Heart right ventricle (tissue), 16 donors: ENCODE measurements at regions of chr2 and their contacts with region 1.

Region 1: GRCh38 chr2:5391362-5391761 is 300.8 kb upstream of the SOX11 start:
- DNase-seq: peak; percentile 49 to 70
- ATAC-seq: peak in 7 of 8 donors; percentile 43 to 89 (median 77)
- H3K4me3 ChIP-seq: no peak overlapping the region
- H3K27ac ChIP-seq: no peak overlapping the region
- H3K4me1 ChIP-seq: no peaks in the 10 kb centered on the region
- H3K27me3 ChIP-seq: no peaks in the 10 kb centered on the region
- CTCF ChIP-seq: no peak

Region 2: DNA sequence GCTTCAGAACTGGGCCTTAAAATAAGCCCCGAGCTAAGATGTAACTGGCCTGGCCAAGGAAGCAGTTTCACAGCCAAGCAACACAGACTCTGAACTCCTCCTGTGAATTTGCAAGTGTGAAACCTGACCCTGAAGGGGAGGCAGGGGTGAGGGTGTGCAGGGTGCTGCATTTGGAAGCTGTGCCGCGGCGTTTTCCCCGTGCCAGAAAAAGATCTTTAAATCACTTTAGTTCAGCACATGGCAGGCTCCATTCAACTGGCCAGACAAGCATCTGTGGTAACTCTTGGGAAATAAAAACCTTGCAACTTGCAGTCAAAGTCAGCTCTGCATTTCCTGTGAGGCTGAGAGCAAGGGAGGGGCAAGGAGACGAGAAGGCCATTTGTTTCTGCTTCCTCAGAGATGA is 91.6 kb after region 1 on chr2:
- intact Hi-C with region 1: no loop called
- DNase-seq: peak in 1 of 2 donors; percentile 7
- ATAC-seq: peak in 2 of 8 donors; percentile 17 to 40
- H3K4me3 ChIP-seq: no peak overlapping the region
- H3K27ac ChIP-seq: peak overlapping the region in 3 of 10 donors; percentile 22 to 48 (median 42)
- H3K4me1 ChIP-seq: peaks cover 0 to 35% (median 7%) of the 10 kb centered on the region in 9 donors
- H3K27me3 ChIP-seq: no peaks in the 10 kb centered on the region
- CTCF ChIP-seq: no peak

Region 3: GRCh38 chr2:5519286-5519685 is 127.9 kb after region 1 on chr2:
- intact Hi-C with region 1: loop called in 1 of 10 experiments (anchors 5 kb)
- DNase-seq: no peak
- ATAC-seq: no peak
- H3K4me3 ChIP-seq: no peak overlapping the region
- H3K27ac ChIP-seq: no peak overlapping the region
- H3K4me1 ChIP-seq: peaks cover 0 to 23% (median 9%) of the 10 kb centered on the region in 9 donors
- H3K27me3 ChIP-seq: no peaks in the 10 kb centered on the region
- CTCF ChIP-seq: no peak

Region 4: DNA sequence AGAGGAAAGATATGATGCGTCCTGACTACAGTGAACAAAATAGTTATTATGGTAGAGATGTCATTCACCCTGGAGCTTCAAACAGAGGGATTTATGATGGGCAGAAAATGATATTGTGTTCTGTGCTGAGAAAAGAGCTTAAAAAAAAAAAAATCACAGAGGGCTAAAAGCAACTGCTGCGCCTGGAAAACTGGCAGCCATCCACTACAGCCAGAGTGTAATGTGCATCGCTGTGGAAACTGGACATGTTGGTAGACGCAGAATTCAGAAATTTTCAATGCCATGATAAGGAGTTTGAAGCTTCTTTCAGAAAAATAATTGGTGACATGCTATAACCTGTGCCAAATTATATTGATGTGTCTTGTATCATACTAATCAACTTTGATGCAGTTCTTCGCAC is 177.9 kb after region 1 on chr2:
- intact Hi-C with region 1: no loop called
- DNase-seq: no peak
- ATAC-seq: no peak
- H3K4me3 ChIP-seq: no peak overlapping the region
- H3K27ac ChIP-seq: no peak overlapping the region
- H3K4me1 ChIP-seq: no peaks in the 10 kb centered on the region
- H3K27me3 ChIP-seq: no peaks in the 10 kb centered on the region
- CTCF ChIP-seq: no peak

Region 5: GRCh38 chr2:5915881-5916310 is 524.5 kb after region 1 on chr2:
- intact Hi-C with region 1: loop called in 1 of 10 experiments (anchors 10 kb)
- DNase-seq: peak in 1 of 2 donors; percentile 22
- ATAC-seq: peak in 3 of 8 donors; percentile 29 to 45 (median 40)
- H3K4me3 ChIP-seq: no peak overlapping the region
- H3K27ac ChIP-seq: peak overlapping the region; percentile 59 to 87 (median 81)
- H3K4me1 ChIP-seq: peaks cover 0 to 23% (median 7%) of the 10 kb centered on the region in 9 donors
- H3K27me3 ChIP-seq: no peaks in the 10 kb centered on the region
- CTCF ChIP-seq: peak in 7 of 9 donors; percentile 27 to 49 (median 38)